ENCODE measurements at regions of chr2 and their contacts with region 1.

Region 1: DNA sequence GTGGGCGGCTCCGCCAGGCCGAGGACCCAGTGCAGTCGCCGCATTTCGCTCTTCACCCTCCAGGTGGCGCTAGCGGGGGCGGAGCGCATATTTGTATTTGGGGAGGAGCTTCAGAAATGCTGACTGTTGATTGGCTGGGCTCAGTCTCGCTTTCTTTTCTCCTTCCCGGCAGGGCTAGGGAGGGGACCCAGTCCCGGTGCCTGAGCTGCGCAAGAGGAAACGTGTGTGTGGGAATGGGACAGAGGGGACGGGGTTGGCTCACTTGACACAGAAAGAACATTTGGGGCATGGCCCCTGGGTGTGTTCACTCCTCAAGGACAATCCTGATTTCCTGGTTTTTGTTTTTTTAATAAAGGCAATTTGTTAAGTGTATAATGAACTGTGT is 20.3 kb upstream of the DNMT3A start:
- DNase-seq: peak; percentile 97

Region 2: GRCh38 chr2:24164125-24164973 is 1197.7 kb before region 1 on chr2:
- intact Hi-C with region 1: no loop called
- DNase-seq: no peak

Region 3: DNA sequence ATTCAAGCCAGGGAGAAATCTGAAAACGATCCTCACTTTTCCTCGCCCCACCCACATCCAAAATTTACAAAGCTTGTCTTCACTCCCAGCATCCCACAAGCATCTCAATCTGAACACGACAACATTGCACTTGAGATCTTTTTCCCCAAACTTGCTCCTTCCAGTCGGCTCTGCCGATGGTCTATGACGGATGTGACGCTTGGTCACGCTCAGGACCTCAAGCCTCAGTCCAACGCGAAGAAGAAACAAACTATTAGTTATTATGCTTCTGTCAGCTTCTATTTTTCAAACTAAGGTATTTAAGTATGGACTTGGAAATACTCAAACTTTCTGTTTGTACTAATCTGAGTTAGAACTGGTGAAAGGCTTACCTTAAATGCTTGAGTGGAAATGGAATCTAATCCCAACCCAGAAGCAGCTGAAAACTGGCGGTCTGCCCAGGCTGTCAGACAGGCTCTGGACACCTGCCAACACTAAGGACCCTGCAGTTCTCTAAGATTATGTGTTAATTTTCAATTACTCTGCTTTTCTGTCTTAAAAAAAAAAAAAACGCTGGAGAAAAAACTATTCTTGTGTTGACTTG is 111.8 kb after region 1 on chr2:
- intact Hi-C with region 1: no loop called
- DNase-seq: no peak

Region 4: DNA sequence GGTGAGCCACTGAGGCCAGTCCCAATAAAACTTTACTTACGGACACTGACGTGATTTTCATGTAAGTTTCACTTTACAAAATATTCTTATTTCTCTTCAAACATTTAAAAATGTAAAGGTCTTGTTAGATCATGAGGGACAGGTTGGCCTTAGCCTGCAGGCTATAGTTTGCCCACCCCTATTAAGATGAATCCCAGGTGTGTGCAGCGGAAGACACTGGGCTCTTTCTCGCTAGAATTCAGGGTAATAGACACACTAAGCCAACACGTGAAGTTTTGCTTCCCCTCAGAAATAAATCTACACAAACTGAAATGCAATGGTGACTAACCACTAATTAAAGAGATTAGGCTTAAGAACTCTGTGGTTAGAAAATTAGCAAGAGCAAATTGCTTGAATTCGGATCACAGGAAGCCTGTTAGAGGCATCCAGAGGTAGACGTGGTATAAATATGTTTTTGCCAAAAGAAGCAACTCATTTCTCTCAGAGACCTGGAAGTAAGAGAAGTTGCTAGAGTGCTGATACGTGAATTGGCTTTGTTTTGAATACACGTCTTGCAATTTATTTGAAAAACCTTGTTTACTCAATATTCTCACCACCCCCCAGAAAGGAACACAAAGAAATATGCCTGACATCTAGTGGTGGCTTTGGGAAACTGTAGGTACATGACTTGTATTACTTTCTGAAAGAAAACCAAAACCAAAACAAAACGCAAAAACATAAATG is 159.8 kb after region 1 on chr2:
- intact Hi-C with region 1: loop called in 1 of 2 experiments (anchors 10 kb)
- DNase-seq: no peak

Measured in posterior vena cava (tissue), 2 donors.